Activated CD8-positive, alpha-beta memory T cell treated with anti-CD3 and anti-CD28 coated beads, Interleukin-2, amount 10 ng/mL, durations not matched to agents 7 days and 5 days (primary cell): ENCODE measurements at regions of chr16 and their contacts with region 1.

Region 1: DNA sequence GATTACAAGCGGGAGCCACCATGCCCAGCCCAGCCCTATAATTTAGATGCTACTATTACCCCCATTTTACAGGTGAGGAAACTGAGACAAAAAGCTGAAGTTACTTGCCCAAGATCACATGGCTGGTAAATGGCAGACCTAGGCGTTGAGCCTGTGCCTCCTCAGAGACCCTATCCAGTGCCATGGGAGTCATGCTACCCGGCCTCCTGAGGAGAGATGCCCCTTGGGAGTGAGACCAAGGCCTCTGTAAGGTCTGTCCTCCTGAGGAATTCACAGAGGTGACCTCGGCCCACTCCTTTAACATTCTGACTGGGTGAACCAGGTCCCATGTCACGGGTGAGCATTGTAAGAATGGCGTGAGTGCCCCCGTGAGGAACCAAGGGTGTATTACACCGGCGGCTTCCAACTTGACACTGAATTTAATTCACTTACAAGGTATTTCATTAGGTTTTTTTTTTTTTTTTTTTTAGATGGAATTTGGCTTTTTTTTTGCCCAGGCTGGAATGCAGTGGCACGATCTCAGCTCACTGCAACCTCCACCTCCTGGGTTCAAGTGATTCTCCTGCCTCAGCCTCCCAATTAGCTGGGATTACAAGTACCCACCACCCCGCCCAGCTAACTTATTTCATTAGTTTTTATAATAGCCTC is 95.7 kb downstream of the ABCC6 start:
- DNase-seq: peak; percentile 81
- ATAC-seq: peak; percentile 82
- H3K4me3 Mint-ChIP-seq: no peak overlapping the region
- H3K27ac Mint-ChIP-seq: peak overlapping the region; percentile 17
- H3K4me1 Mint-ChIP-seq: no peaks in the 10 kb centered on the region
- H3K27me3 Mint-ChIP-seq: no peaks in the 10 kb centered on the region

Region 2: GRCh38 chr16:15765880-15766279 is 361.7 kb before region 1 on chr16:
- CTCF ChIA-PET with region 1: interaction called, 15 read pairs
- DNase-seq: peak; percentile 69
- ATAC-seq: peak; percentile 76
- H3K4me3 Mint-ChIP-seq: no peak overlapping the region
- H3K27ac Mint-ChIP-seq: no peak overlapping the region
- H3K4me1 Mint-ChIP-seq: peaks cover 2% of the 10 kb centered on the region
- H3K27me3 Mint-ChIP-seq: peaks cover 9% of the 10 kb centered on the region

Region 3: GRCh38 chr16:15874745-15875314 is 252.8 kb before region 1 on chr16:
- CTCF ChIA-PET with region 1: interaction called, 11 read pairs
- DNase-seq: no peak
- ATAC-seq: no peak
- H3K4me3 Mint-ChIP-seq: no peak overlapping the region
- H3K27ac Mint-ChIP-seq: no peak overlapping the region
- H3K4me1 Mint-ChIP-seq: peaks cover 4% of the 10 kb centered on the region
- H3K27me3 Mint-ChIP-seq: no peaks in the 10 kb centered on the region

Region 4: DNA sequence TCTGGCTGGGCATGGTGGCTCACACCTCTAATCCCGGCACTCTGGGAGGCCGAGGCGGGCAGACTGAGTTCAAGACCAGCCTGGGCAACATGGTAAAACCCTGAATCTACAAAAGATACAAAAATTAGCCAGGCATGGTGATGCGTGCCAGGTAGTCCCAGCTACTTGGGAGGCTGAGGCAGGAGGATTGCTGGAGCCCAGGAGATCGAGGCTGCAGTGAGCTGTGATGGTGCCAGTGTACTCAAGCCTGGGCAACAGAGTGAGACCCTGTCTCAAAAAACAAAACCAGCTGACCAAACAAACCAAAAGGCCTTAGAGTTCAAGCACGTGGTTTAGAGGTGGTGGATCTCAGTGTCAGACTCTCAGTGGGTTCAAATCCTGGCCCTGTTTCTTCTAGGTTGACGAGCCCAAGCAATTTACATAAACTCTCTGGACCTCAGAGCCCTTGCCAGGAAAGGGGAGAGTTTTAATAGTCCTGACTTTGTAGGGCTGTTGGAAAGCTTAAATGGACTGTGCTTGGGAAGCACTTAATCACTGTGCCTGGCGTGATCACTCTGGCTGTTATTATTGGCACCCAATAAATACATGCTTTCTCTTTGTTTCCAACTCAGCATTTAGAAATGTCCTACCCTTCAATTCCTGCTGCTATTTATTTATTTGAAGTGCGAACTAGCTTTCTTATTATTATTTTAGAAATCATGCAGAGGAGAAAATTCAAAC is 133.5 kb before region 1 on chr16:
- CTCF ChIA-PET with region 1: no interaction called
- DNase-seq: no peak
- ATAC-seq: no peak
- H3K4me3 Mint-ChIP-seq: no peak overlapping the region
- H3K27ac Mint-ChIP-seq: no peak overlapping the region
- H3K4me1 Mint-ChIP-seq: peaks cover 36% of the 10 kb centered on the region
- H3K27me3 Mint-ChIP-seq: no peaks in the 10 kb centered on the region

Region 5: DNA sequence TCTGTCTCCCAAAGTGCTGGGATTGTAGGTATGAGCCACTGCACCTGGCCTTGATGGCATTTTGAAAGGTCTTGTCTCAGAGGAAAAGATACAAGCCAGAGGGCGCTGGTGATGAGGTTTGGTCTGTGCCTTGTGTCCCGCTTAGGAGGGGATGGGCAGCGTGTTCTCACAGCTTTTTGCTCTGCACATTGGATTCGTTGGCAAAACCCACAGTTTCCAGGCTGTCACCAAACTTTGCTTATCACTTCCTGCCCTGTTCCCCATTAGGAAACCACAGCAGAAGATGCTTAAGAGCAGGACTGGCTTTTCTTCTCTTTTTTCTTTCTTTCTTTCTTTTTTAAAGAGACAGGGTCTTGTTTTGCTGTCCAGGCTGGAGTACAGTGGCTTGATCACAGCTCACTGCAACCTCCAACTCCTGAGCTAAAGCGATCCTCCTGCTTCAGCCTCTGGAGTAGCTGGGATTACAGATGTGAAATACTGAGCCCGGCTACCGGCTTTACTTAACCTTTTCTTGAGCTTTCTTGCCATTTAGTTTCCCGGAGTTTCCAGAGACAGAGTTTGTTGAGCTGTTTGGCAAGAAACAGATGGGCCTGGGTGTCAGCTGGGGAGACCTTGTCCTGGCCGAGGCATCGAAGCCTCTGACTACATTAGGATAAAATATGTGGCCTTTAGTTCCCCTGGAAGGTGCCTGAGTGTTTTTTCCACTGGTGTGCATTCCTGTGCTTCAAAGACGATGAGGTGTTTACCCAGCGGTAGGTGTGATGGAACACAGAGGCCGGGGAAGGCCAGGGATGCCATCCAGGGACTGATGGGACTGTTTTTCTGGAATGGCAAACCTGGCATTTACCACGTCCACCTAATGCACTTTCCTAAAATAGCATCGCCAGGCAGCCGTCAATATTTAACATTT is 65.3 kb before region 1 on chr16:
- CTCF ChIA-PET with region 1: interaction called, 11 read pairs
- DNase-seq: peak; percentile 71
- ATAC-seq: peak; percentile 75
- H3K4me3 Mint-ChIP-seq: no peak overlapping the region
- H3K27ac Mint-ChIP-seq: peak overlapping the region; percentile 77
- H3K4me1 Mint-ChIP-seq: peaks cover 31% of the 10 kb centered on the region
- H3K27me3 Mint-ChIP-seq: no peaks in the 10 kb centered on the region